ENCODE measurements at regions of chr1 and their contacts with region 1.

Region 1: GRCh38 chr1:27203946-27204345 is 30.5 kb upstream of the WDTC1 start:
- DNase-seq: no peak
- ATAC-seq: no peak
- H3K4me3 Mint-ChIP-seq: no peak overlapping the region
- H3K27ac Mint-ChIP-seq: no peak overlapping the region
- H3K4me1 Mint-ChIP-seq: no peaks in the 10 kb centered on the region
- H3K27me3 Mint-ChIP-seq: no peaks in the 10 kb centered on the region

Region 2: DNA sequence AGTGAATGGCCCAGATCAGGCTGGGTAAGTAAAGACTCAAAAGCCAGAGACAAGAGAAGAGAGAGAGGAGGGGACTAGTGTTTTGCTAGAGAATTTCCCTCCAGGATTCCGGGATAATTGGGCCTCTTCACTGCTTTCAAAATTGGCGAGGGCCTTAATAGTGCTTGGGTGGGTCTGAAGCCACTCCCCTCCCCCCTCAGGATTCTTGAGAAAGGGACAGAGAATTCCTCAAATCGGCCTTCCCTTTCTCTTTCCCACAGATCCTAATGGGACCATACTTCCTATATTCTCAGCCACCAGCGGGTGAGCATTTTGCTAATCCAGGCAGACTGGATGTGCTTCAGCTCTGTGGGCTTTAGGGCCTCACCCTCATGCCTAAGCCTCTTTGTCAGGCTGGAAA is 329.1 kb before region 1 on chr1:
- CTCF ChIA-PET with region 1: no interaction called
- POLR2A ChIA-PET with region 1: no interaction called
- intact Hi-C with region 1: no loop called
- DNase-seq: no peak
- ATAC-seq: no peak
- H3K4me3 Mint-ChIP-seq: no peak overlapping the region
- H3K27ac Mint-ChIP-seq: no peak overlapping the region
- H3K4me1 Mint-ChIP-seq: peaks cover 2% of the 10 kb centered on the region
- H3K27me3 Mint-ChIP-seq: no peaks in the 10 kb centered on the region

Region 3: GRCh38 chr1:27010989-27011764 is 192.8 kb before region 1 on chr1:
- CTCF ChIA-PET with region 1: no interaction called
- POLR2A ChIA-PET with region 1: no interaction called
- intact Hi-C with region 1: no loop called
- DNase-seq: no peak
- ATAC-seq: no peak
- H3K4me3 Mint-ChIP-seq: no peak overlapping the region
- H3K27ac Mint-ChIP-seq: no peak overlapping the region
- H3K4me1 Mint-ChIP-seq: peaks cover 4% of the 10 kb centered on the region
- H3K27me3 Mint-ChIP-seq: peaks cover 23% of the 10 kb centered on the region

Region 4: GRCh38 chr1:27650539-27651175 is 446.7 kb after region 1 on chr1:
- CTCF ChIA-PET with region 1: no interaction called
- POLR2A ChIA-PET with region 1: interaction called, 13 read pairs
- intact Hi-C with region 1: no loop called
- DNase-seq: no peak
- ATAC-seq: peak; percentile 36
- H3K4me3 Mint-ChIP-seq: no peak overlapping the region
- H3K27ac Mint-ChIP-seq: peak overlapping the region; percentile 58
- H3K4me1 Mint-ChIP-seq: peaks cover 14% of the 10 kb centered on the region
- H3K27me3 Mint-ChIP-seq: no peaks in the 10 kb centered on the region

Measured in activated CD4-positive, alpha-beta T cell treated with anti-CD3 and anti-CD28 coated beads for 36 hours (primary cell).